K562 (cell line): ENCODE measurements at regions of chr2 and their contacts with region 1.

Region 1: GRCh38 chr2:73176881-73177644 is 25.3 kb upstream of the NOTO start:
- DNase-seq: peak; percentile 93 to 95 (median 94)
- ATAC-seq: peak; percentile 93
- H3K4me3 ChIP-seq: peak overlapping the region; percentile 31
- H3K27ac ChIP-seq: no peak overlapping the region
- H3K4me1 ChIP-seq: peaks cover 11 to 29% of the 10 kb centered on the region in 2 experiments; a peak in 4 of 5 replicates
- H3K27me3 ChIP-seq: peaks cover 3 to 35% of the 10 kb centered on the region in 2 experiments; a peak in 3 of 5 replicates
- CTCF ChIP-seq: peak; percentile 95 to 99 (median 99)
- EP300 ChIP-seq: no peak
- POLR2A ChIP-seq: no peak
- RAD21 ChIP-seq: peak; percentile 96 to 97

Region 2: DNA sequence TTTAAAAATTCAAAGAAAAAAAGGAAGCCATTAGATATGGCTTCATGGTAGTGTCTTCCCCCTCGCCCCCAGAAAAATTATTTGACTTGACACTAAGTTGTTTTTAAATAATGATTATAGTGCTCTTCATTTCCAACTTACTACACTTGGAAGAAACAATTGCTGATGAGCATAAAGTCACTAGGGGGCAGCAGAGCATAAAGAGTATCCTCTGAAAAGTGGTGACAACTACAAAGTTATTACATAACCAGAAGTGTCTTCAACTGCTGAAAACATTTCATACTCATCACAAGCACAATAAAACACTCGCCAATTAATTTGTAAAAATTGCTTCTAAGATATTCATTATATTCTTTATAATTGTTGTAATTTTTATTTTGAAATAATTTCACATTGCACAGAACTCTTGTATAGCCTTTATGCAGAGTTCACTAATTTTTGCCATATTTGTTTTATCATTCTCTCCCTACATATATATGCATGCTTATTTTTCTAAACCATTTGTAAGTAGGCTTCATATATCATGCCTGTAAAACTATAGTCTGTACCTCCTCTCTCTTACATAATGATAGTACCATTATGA is 406.1 kb before region 1 on chr2:
- CTCF ChIA-PET with region 1: interaction called, 12 read pairs
- POLR2A ChIA-PET with region 1: no interaction called
- in situ Hi-C with region 1: no loop called
- intact Hi-C with region 1: loop called (anchors 5 kb)
- DNase-seq: peak; percentile 41 to 76 (median 54)
- ATAC-seq: peak; percentile 76
- H3K4me3 ChIP-seq: no peak overlapping the region
- H3K27ac ChIP-seq: no peak overlapping the region
- H3K4me1 ChIP-seq: no peaks in the 10 kb centered on the region
- H3K27me3 ChIP-seq: no peaks in the 10 kb centered on the region; a peak in 1 of 5 replicates
- CTCF ChIP-seq: peak; percentile 66 to 94 (median 69); a peak in 5 of 6 replicates
- EP300 ChIP-seq: no peak
- POLR2A ChIP-seq: no peak
- RAD21 ChIP-seq: peak; percentile 96

Region 3: DNA sequence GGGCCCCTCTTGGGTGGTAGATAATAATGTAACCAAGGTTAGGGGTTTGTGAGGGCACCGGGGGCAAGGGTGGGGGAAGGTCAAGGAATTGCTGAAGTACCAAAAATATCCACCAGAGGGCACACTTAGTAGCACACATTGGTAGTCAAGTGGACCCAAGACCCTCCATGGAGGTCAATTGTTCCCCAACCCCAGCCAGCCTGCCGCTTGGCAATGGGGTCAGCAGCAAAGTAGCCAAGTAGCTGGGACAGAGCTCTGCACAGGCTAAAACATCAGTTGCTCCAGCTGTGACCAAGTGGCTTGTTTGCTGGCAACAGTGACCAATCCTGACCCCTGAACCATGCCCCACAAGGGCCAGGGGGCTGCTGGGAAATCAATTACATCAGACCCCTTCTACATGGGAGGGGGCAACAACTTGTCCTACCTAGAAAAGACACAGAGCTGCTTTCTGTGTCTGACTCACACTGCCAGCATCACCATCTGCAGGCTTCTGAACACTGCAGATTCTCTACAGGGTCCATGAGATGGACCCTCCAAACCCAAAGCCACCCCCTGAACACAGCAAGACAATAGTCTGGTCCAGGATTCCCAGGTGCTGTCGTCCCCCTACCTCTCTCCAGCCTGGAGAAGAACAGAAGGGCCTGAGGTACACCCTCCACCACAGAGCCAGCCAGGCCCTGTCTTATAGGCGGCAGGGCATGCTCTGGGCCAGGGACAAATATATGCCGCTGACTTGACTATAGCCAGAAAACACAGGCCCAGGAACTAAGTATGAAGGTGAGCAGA is 183.7 kb before region 1 on chr2:
- CTCF ChIA-PET with region 1: interaction called, 14 read pairs
- POLR2A ChIA-PET with region 1: no interaction called
- in situ Hi-C with region 1: no loop called
- intact Hi-C with region 1: loop called (anchors 2 kb)
- DNase-seq: peak; percentile 70 to 86 (median 79)
- ATAC-seq: peak; percentile 86
- H3K4me3 ChIP-seq: no peak overlapping the region
- H3K27ac ChIP-seq: no peak overlapping the region
- H3K4me1 ChIP-seq: peaks cover 0 to 12% of the 10 kb centered on the region in 2 experiments; a peak in 2 of 5 replicates
- H3K27me3 ChIP-seq: no peaks in the 10 kb centered on the region
- CTCF ChIP-seq: peak; percentile 68 to 79 (median 72)
- EP300 ChIP-seq: no peak
- POLR2A ChIP-seq: no peak
- RAD21 ChIP-seq: peak; percentile 52 to 68

Region 4: GRCh38 chr2:73163483-73164367 is 13.3 kb before region 1 on chr2:
- CTCF ChIA-PET with region 1: interaction called, 6 read pairs
- POLR2A ChIA-PET with region 1: interaction called, 3 read pairs
- in situ Hi-C with region 1: no loop called
- intact Hi-C with region 1: loop called (anchors 1 kb)
- DNase-seq: peak; percentile 81 to 86 (median 84)
- ATAC-seq: peak; percentile 97
- H3K4me3 ChIP-seq: no peak overlapping the region
- H3K27ac ChIP-seq: no peak overlapping the region
- H3K4me1 ChIP-seq: peaks cover 5% of the 10 kb centered on the region in 2 experiments; a peak in 3 of 5 replicates
- H3K27me3 ChIP-seq: peaks cover 0 to 4% of the 10 kb centered on the region in 2 experiments; a peak in 2 of 5 replicates
- CTCF ChIP-seq: peak; percentile 84 to 95 (median 91)
- EP300 ChIP-seq: no peak
- POLR2A ChIP-seq: no peak
- RAD21 ChIP-seq: peak; percentile 86 to 88

Region 5: DNA sequence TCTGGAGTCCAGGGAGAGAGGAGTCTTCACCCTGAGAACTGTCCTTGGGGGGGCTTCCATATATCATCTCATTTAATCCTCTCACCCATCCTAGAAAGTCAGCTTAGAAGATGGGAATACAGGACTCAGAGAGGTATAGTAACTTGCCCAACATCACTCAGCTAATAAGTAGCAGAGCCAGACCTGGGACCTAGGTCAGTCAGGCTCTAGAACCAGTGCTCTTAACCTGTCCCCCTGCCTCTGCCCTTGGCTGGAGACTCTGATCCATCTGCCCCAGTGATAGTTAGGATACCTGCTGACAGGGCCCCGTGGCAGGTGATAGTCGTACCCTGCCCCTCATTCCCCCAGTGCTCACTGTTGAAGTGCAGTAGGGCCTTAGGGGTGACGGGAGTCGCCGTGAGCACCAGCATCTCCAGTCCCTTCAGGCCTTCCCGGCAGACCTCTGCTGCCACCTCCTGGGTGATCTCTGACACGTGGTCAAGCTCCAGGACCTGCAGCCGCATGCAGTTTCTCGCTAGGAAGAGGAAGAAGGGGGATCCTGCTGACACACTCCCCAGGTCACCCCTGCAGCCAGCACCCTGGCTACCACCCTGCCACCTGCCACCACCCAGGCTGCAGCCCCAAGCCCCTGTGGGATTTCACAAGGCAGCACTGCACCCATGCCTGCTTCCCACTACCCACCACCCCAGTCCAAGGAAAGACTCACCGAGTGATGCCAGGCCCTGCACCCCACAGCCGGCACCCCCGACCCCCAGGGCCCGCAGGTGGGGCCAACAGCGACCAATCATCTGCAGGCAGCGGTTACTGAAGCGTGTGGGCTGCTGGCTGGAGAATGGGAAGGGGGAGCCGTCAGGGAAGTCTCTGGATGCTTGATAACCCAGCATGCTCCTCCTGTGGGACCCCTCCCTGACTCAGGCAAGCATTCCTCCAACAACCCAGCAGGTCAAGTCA is 83.2 kb after region 1 on chr2:
- CTCF ChIA-PET with region 1: no interaction called
- POLR2A ChIA-PET with region 1: interaction called, 5 read pairs
- in situ Hi-C with region 1: no loop called
- intact Hi-C with region 1: loop called (anchors 5 kb)
- DNase-seq: peak; percentile 80 to 84 (median 80)
- ATAC-seq: peak; percentile 94
- H3K4me3 ChIP-seq: no peak overlapping the region
- H3K27ac ChIP-seq: no peak overlapping the region
- H3K4me1 ChIP-seq: peaks cover 2 to 13% of the 10 kb centered on the region in 2 experiments; a peak in 2 of 5 replicates
- H3K27me3 ChIP-seq: no peaks in the 10 kb centered on the region
- CTCF ChIP-seq: peak; percentile 80 to 84 (median 80)
- EP300 ChIP-seq: no peak
- POLR2A ChIP-seq: no peak
- RAD21 ChIP-seq: peak; percentile 58 to 77